Activated T-helper 2 cell treated with anti-CD3 and anti-CD28 coated beads, Interferon-gamma antibody, Interleukin-2, Interleukin-4, amounts not matched to agents 10 μg/mL and 5 μg/mL and 100 μg/mL, durations not matched to agents 14 hours and 24 hours and 36 hours (primary cell): ENCODE measurements at regions of chr10 and their contacts with region 1.

Region 1: DNA sequence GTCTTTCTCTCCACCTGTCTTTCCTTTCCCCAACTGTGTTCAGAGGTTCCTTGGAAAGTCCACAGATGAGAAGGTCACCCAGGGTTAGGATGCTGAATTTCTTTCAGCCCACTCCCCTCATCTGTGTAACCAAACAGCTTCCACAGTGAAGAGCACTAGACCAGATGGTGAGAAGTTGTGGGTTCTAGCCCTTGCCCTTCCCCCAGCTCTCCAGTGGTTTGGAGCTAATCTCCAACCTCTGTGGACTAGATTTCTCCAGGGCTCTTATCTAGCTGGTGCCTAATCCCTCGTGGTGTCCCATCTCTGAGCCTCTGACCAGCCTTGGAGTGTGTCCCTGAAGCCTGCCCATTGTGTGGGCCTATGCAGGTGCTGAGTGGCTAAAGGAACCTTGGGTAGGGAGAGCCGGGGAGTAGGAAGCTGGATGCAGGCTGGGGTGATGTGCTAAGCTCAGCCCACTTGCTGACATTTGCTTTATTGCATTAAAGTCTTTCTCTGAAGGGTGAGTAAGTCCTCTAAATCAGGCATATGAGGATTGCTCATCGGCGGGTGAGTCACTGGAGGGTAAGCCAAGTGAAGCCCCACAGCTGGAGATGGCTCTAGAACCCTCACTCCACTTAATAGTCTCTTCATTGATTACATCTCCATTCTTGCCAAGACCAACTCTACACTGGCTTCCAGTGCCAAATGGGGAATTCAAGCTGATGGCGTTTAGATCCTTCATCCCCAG is 14.9 kb downstream of the DUSP5 start:
- DNase-seq: no peak
- H3K4me3 Mint-ChIP-seq: peak overlapping the region; percentile 26
- H3K27ac Mint-ChIP-seq: peak overlapping the region; percentile 78
- H3K4me1 Mint-ChIP-seq: peaks cover 60% of the 10 kb centered on the region
- H3K27me3 Mint-ChIP-seq: no peaks in the 10 kb centered on the region

Region 2: DNA sequence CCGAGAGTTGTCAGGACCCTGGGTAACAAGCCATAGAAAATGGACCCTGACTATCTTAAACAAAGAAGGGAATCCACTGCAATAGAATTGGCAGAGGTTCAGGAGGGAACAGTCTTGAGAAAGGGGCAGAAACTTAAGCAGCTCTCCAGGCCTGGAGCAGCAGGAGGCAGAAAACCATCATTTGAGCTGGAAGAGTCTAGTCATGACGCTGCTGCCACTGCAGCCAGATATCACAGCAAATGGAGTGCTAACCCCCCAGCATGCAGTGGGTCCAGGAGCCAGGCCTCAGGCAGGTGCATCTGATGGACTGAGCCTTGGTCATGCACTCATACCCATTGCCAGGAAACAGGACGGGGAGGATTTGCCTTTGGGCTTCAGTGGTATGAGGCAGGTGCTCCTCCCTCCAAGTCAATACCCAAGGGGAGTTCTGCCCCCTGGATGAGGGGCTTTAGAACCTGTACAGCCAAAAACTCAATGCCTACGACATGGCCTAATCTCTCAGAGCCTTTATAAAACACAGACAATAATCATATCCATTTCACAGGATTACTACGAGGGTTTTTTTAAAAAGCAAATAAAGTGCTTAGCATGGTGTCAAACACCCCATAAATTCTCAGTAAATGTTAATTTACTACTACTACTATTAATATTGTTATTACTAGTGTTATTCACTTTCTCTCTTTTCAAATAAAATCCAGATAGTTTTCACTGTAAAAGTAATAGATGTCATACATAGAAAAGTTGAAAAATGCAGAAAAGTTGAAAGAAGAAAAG is 15.8 kb after region 1 on chr10:
- intact Hi-C with region 1: loop called (anchors 2 kb)
- DNase-seq: no peak
- H3K4me3 Mint-ChIP-seq: peak overlapping the region; percentile 1
- H3K27ac Mint-ChIP-seq: peak overlapping the region; percentile 73
- H3K4me1 Mint-ChIP-seq: peaks cover 66% of the 10 kb centered on the region
- H3K27me3 Mint-ChIP-seq: no peaks in the 10 kb centered on the region

Region 3: GRCh38 chr10:110535958-110536891 is 23.6 kb after region 1 on chr10:
- intact Hi-C with region 1: loop called (anchors 1 kb)
- DNase-seq: peak; percentile 42
- H3K4me3 Mint-ChIP-seq: peak overlapping the region; percentile 27
- H3K27ac Mint-ChIP-seq: peak overlapping the region; percentile 92
- H3K4me1 Mint-ChIP-seq: peaks cover 55% of the 10 kb centered on the region
- H3K27me3 Mint-ChIP-seq: no peaks in the 10 kb centered on the region

Region 4: GRCh38 chr10:110852255-110852896 is 339.8 kb after region 1 on chr10:
- intact Hi-C with region 1: no loop called
- DNase-seq: no peak
- H3K4me3 Mint-ChIP-seq: no peak overlapping the region
- H3K27ac Mint-ChIP-seq: no peak overlapping the region
- H3K4me1 Mint-ChIP-seq: peaks cover 42% of the 10 kb centered on the region
- H3K27me3 Mint-ChIP-seq: no peaks in the 10 kb centered on the region